ENCODE measurements at regions of chr22 and their contacts with region 1.

Region 1: GRCh38 chr22:32421484-32421883 is 9.4 kb upstream of the RTCB start:
- DNase-seq: no peak
- H3K4me3 ChIP-seq: no peak overlapping the region
- H3K27ac ChIP-seq: no peak overlapping the region
- H3K4me1 ChIP-seq: no peaks in the 10 kb centered on the region
- H3K27me3 ChIP-seq: no peaks in the 10 kb centered on the region
- CTCF ChIP-seq: no peak
- POLR2A ChIP-seq: no peak

Region 2: GRCh38 chr22:32364210-32364609 is 57.3 kb before region 1 on chr22:
- intact Hi-C with region 1: no loop called
- DNase-seq: no peak
- H3K4me3 ChIP-seq: no peak overlapping the region
- H3K27ac ChIP-seq: no peak overlapping the region
- H3K4me1 ChIP-seq: no peaks in the 10 kb centered on the region
- H3K27me3 ChIP-seq: no peaks in the 10 kb centered on the region
- CTCF ChIP-seq: no peak
- POLR2A ChIP-seq: no peak

Region 3: GRCh38 chr22:32462452-32462851 is 41.0 kb after region 1 on chr22:
- intact Hi-C with region 1: loop called (anchors 5 kb)
- DNase-seq: no peak
- H3K4me3 ChIP-seq: no peak overlapping the region
- H3K27ac ChIP-seq: no peak overlapping the region
- H3K4me1 ChIP-seq: no peaks in the 10 kb centered on the region
- H3K27me3 ChIP-seq: no peaks in the 10 kb centered on the region
- CTCF ChIP-seq: no peak
- POLR2A ChIP-seq: no peak

Measured in prostate gland (tissue), 2 donors.